Mammary epithelial cell (primary cell): ENCODE measurements at regions of chr17 and their contacts with region 1.

Region 1: GRCh38 chr17:4220655-4221054 is 43.1 kb downstream of the ANKFY1 start:
- DNase-seq: no peak
- H3K4me3 ChIP-seq: no peak overlapping the region
- H3K27ac ChIP-seq: no peak overlapping the region
- H3K4me1 ChIP-seq: peaks cover 14% of the 10 kb centered on the region
- H3K27me3 ChIP-seq: no peaks in the 10 kb centered on the region
- CTCF ChIP-seq: no peak

Region 2: GRCh38 chr17:2736956-2737355 is 1483.7 kb before region 1 on chr17:
- CTCF ChIA-PET with region 1: no interaction called
- dilution Hi-C with region 1: no loop called
- in situ Hi-C with region 1: no loop called
- intact Hi-C with region 1: no loop called
- DNase-seq: peak; percentile 96
- H3K4me3 ChIP-seq: no peak overlapping the region
- H3K27ac ChIP-seq: peak overlapping the region; percentile 68
- H3K4me1 ChIP-seq: peaks cover 4% of the 10 kb centered on the region
- H3K27me3 ChIP-seq: no peaks in the 10 kb centered on the region
- CTCF ChIP-seq: no peak

Region 3: DNA sequence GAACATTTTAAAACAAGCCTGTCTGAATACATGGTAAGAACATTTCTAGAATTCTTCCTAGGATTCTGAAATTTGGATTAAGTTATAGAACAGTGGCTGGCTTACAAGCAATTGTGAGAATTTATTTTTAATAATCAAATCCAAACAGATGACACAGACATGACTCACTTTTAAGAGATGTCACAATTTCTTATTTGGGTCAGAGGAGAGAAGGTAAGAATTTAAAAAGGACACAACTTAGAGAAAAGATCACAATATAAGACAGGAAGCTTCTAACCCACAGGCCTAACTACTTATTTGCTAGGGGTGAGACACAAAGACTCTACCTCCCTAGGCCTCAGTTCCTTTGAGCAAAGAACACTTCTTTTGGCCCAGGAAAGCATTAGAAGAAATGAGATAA is 110.5 kb before region 1 on chr17:
- CTCF ChIA-PET with region 1: no interaction called
- dilution Hi-C with region 1: no loop called
- in situ Hi-C with region 1: no loop called
- intact Hi-C with region 1: no loop called
- DNase-seq: peak; percentile 38
- H3K4me3 ChIP-seq: no peak overlapping the region
- H3K27ac ChIP-seq: no peak overlapping the region
- H3K4me1 ChIP-seq: peaks cover 5% of the 10 kb centered on the region
- H3K27me3 ChIP-seq: no peaks in the 10 kb centered on the region
- CTCF ChIP-seq: no peak

Region 4: GRCh38 chr17:4249452-4250029 is 28.9 kb after region 1 on chr17:
- CTCF ChIA-PET with region 1: interaction called, 5 read pairs
- dilution Hi-C with region 1: no loop called
- in situ Hi-C with region 1: no loop called
- intact Hi-C with region 1: loop called (anchors 1 kb)
- DNase-seq: peak; percentile 32
- H3K4me3 ChIP-seq: no peak overlapping the region
- H3K27ac ChIP-seq: peak overlapping the region; percentile 96
- H3K4me1 ChIP-seq: peaks cover 27% of the 10 kb centered on the region
- H3K27me3 ChIP-seq: no peaks in the 10 kb centered on the region
- CTCF ChIP-seq: peak; percentile 65 to 66

Region 5: DNA sequence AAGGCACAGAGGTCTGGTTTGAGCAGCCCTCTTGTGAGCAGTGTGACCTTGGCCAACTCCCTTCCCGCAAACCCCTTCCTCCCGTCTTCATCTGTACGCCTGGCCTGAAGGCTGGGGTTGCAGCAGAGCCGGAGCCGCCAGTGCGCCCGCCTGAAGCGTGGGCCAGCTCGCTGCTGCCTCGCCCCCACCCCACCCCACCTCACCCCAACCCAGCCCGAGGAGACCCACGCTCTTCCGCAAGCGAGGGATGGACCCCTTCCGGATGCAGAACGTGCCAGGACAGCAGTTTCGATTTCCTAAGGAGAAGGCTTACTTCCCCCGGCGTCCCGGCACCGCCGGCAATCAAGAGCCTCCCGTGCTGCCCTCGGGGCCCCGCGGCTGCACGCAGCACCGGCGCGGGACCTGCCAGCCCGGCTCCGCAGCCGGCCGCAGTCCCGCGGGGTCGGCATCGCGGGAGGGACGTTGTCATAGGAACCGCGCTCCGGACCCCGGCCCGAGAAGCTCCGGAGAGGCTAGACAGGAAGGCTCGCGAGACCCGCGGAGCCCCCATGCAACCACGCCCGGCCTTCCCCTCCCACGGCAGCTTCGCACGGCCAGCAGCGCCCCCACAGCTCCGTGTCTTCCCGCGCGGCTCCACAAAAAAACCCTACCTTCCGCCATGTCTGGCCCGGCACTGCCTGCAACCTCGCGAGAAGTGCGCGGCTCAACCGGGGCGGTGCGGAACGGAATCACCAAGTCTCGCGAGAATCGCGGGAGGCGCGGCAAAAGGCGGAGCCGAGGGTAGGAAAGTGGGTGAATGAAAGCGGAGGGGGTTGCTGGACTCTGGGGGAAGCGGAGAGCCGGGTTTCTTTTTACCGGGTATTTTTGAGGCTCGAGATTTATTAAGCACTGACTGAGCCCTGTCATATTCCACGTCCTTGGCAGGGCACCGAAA is 42.9 kb after region 1 on chr17 and contains the start of gene ANKFY1:
- CTCF ChIA-PET with region 1: no interaction called
- dilution Hi-C with region 1: loop called (anchors 5 kb)
- in situ Hi-C with region 1: no loop called
- intact Hi-C with region 1: loop called (anchors 2 kb)
- DNase-seq: peak; percentile 90
- H3K4me3 ChIP-seq: peak within 1 kb of the TSS; percentile 71 to 97 (median 86)
- H3K27ac ChIP-seq: peak within 1 kb of the TSS; percentile 79
- H3K4me1 ChIP-seq: peaks cover 22% of the 10 kb centered on the region
- H3K27me3 ChIP-seq: no peaks in the 10 kb centered on the region
- CTCF ChIP-seq: peak in 1 of 2 donors; percentile 24
- total RNA-seq, gene ANKFY1: 45.4 to 46.2 TPM

Region 6: GRCh38 chr17:4269915-4270314 is 49.3 kb after region 1 on chr17:
- CTCF ChIA-PET with region 1: no interaction called
- dilution Hi-C with region 1: loop called (anchors 5 kb)
- in situ Hi-C with region 1: no loop called
- intact Hi-C with region 1: no loop called
- DNase-seq: no peak
- H3K4me3 ChIP-seq: no peak overlapping the region
- H3K27ac ChIP-seq: no peak overlapping the region
- H3K4me1 ChIP-seq: peaks cover 5% of the 10 kb centered on the region
- H3K27me3 ChIP-seq: no peaks in the 10 kb centered on the region
- CTCF ChIP-seq: no peak

Region 7: DNA sequence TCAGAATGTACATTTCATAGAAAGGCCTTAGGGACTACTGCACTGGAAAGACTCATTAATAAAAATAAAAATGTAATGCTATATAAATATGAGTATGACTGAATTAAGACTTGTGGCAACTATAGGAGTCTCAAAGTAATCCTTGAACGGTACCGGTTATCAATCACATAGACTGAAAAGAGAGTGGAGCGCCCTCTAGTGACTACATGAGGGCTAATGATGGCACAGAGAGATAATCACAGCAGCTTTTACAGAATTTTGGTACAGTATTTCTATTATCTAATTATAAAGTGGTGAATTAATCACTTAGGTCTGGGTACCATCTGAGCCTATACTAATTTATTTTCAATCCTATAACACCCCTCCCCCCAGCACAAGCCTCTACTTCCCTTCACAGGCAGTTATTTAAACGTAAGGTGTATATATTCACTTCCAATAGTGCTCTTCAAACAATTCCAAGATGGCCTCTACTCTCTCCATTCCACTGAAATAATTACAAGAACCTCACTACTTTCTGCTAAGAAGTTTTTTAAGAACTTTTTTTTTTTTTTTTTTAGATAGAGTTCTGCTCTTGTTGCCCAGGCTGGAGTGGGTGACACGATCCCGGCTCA is 83.9 kb after region 1 on chr17:
- CTCF ChIA-PET with region 1: no interaction called
- dilution Hi-C with region 1: no loop called
- in situ Hi-C with region 1: no loop called
- intact Hi-C with region 1: loop called (anchors 2 kb)
- DNase-seq: peak; percentile 35
- H3K4me3 ChIP-seq: no peak overlapping the region
- H3K27ac ChIP-seq: no peak overlapping the region
- H3K4me1 ChIP-seq: no peaks in the 10 kb centered on the region
- H3K27me3 ChIP-seq: no peaks in the 10 kb centered on the region
- CTCF ChIP-seq: peak; percentile 69 to 73

Region 8: DNA sequence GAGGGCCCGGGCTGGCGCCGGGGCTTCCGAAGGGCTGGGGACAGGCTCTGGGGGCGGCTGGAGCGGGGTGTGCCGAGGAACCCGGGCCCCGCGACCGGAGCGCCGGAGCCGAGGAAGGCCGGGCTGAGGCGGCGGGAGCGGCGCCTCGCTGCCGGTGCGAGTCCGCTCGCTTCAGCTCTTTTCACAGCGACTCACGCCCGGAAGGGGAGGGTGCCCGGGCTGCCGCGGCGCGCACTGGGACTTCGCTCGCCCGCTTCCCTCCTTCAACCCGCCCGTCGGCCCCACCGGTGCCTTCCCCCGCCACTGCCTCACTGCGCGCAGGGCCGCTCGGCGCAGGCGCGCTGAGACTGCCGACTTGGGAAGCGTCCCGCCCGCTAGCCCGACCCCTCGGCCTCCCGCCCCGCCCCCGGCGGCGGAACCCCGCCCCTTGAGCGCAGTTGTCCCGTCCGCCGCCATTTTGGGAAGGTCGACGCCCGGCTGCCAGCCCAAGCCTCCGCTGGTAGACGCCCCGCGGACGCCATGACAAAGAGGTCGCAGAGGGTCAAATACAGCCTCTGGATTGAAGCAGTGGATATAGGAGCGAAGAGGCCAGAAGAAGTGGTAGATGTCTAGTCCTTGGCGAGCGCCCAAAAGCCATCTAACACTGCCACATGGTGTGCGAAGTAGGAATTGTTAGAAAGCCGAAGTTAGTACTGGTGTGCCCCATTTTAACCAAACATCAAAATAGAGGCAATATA is 145.8 kb after region 1 on chr17 and contains the start of gene UBE2G1:
- CTCF ChIA-PET with region 1: no interaction called
- dilution Hi-C with region 1: no loop called
- in situ Hi-C with region 1: no loop called
- intact Hi-C with region 1: loop called (anchors 1 kb)
- DNase-seq: peak; percentile 97
- H3K4me3 ChIP-seq: peak within 1 kb of the TSS; percentile 82 to 87 (median 84)
- H3K27ac ChIP-seq: peak within 1 kb of the TSS; percentile 70
- H3K4me1 ChIP-seq: peaks cover 4% of the 10 kb centered on the region
- H3K27me3 ChIP-seq: no peaks in the 10 kb centered on the region
- CTCF ChIP-seq: peak; percentile 25 to 33
- total RNA-seq, gene UBE2G1: 60.8 to 93.0 TPM